BJ (cell line): ENCODE measurements at regions of chr10 and their contacts with region 1.

Region 1: GRCh38 chr10:31120961-31121685 is 89.5 kb upstream of the ZNF438 start:
- DNase-seq: no peak
- H3K4me3 ChIP-seq: no peak overlapping the region
- H3K27me3 ChIP-seq: no peaks in the 10 kb centered on the region
- CTCF ChIP-seq: no peak

Region 2: DNA sequence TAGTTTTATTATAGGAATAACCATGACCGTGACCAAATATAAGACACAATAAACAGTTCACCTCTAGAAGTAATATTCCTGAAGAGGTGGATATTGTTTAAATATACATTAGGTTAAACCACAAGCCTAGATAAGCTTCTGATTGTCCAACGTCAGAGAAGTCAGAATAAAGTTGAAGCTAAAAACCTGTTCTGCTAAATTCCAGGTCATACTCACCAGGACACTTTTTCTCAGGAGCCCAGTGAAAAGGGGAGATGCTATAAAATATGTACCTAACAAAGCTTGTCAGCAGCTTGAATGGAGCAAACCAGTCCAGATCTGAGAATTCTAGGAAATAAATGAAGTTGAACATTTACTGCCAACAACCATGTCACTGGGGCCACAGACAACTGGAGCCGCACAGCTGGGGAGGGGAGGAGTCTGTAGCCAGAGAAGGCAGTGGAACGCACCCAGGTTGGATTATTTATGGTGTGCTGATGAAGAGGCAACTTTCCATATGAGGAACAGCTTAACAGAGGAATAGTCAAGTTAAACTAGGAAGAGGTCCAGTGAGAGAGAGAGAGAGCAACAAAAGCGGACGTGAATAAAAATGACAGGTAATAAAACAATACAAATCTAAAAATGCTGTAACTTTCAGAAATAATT is 280.6 kb before region 1 on chr10:
- CTCF ChIA-PET with region 1: no interaction called
- POLR2A ChIA-PET with region 1: no interaction called
- DNase-seq: no peak
- H3K4me3 ChIP-seq: no peak overlapping the region
- H3K27me3 ChIP-seq: no peaks in the 10 kb centered on the region
- CTCF ChIP-seq: no peak

Region 3: DNA sequence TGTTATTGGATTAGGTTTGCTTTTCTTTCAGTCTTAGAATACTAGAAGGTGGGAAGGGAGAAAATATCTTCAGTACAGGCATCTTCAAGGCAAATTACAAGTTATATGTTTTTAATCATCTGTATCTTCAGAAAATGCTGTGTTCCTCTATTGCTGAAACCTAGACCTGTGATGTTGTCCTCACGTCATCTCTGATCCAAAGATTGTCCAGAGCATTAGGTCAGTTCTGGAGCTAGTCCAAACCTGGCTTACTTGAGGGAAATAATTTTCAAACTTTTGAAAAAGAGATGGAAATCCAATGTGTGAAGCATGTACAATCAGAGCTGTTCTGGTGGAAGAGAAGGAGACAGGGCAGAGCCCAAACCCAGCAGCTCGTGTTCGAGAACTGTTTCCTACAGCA is 415.2 kb after region 1 on chr10:
- CTCF ChIA-PET with region 1: no interaction called
- POLR2A ChIA-PET with region 1: interaction called, 21 read pairs
- DNase-seq: no peak
- H3K4me3 ChIP-seq: no peak overlapping the region
- H3K27me3 ChIP-seq: no peaks in the 10 kb centered on the region
- CTCF ChIP-seq: no peak